ENCODE measurements at regions of chr2 and their contacts with region 1.

Region 1: DNA sequence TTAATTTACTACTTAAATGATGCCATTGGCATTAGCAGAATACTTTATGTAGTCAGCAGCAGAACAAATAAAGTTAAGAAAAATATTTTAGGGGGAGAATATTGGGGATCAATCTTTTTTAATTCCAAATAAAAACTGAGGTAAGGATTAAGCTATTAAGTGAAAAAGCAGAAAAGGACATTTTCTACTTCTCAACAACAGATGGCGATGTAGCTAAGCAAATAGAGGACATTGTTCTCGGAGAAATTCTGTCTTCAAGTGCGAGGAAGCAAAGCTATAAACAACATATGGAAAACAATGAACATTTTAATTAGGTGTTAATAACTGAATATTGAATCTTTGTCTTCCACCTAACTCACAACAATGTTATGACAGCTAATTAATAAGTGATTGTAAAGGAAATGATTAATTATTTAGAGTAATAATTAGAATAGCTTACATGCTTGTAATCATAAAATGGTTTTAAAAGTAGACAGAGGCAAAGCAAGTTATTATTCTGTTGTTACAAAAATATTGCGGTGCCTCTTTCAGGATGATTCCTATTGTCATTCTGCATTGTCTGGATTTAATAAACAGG is 32.9 kb upstream of the CCDC93 start:
- DNase-seq: no peak
- ATAC-seq: no peak

Region 2: DNA sequence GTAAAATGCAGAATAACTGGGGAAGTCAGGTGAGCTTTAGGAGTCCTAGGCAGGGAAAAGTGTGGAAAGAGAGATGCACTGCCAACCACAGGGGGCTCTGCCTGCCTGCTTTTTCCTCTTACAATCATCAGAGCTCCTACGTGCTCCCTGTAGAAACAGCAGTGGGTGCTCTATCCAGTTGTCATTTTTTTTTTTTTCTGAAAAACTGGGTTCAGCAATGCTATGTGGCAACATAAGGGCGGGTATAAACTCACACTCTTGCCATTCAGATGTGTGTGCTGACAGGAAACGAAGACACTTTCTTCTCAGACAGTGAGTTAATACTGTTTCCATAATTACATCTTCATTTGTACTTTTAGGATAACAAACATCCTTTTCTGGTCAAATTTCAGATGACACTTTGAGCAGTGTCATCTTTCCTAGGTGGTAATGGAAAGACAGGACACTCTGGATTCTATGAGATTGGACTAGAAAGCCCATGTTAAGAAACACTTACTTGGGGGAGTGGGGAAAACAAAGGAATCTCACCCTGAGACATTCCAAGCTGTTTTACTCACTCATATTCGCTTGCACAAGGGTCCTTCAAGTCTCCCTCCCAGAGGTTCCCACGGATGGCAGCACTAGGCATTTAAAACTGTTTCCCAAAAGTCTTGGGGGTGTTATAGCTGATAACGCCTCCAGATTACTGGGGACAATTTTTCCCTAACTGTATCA is 74.1 kb before region 1 on chr2:
- intact Hi-C with region 1: no loop called
- DNase-seq: no peak
- ATAC-seq: no peak

Region 3: DNA sequence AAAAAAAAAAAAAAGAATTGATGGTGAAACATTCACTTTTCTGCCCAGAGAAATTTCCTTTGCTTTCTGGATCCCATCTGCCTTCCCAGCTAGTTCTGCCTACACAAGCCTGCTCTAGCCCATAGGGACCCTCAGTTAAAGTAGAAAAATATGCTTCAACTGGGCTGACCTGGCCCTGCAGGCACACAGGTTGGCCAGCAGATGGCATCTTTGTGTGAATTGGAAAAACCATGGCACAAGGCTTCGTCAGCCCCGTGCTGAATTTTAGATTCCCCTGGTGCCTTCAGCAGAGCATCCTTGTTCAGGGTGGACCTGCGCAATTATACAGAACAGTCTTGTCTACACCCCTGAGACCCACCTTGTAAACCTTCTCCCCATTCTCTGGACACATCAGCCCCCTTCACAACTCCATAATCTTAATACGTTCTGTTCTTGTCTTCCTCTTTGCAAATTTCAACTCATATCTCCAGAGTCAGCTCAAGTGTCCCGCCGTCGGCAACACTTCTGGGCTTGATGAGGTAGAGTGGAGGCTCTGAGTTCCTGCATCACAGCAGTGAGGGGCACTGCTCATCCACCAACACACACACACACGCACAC is 156.1 kb after region 1 on chr2:
- intact Hi-C with region 1: loop called (anchors 10 kb)
- DNase-seq: no peak
- ATAC-seq: peak; percentile 52

Region 4: DNA sequence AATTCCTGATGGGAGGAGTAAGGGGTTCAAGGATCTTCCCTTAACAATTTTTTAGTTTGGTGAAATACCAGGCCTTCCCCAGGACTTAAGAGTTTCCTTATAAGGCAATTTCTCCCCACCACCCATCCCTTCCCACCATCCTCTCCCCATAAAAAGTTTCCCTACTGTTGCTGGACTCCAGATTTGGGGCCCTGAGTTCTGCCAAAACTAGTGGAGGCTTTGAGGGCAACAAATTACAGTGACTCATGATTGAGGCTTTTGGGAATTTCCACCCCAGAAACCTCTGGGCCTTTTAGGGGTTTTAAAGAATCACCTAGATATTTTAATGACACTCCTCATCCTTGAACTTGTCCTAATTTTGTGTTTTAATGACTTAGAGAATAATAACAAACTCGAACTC is 815.0 kb after region 1 on chr2:
- intact Hi-C with region 1: loop called (anchors 5 kb)
- DNase-seq: no peak
- ATAC-seq: no peak